ENCODE measurements at regions of chr19 and their contacts with region 1.

Region 1: DNA sequence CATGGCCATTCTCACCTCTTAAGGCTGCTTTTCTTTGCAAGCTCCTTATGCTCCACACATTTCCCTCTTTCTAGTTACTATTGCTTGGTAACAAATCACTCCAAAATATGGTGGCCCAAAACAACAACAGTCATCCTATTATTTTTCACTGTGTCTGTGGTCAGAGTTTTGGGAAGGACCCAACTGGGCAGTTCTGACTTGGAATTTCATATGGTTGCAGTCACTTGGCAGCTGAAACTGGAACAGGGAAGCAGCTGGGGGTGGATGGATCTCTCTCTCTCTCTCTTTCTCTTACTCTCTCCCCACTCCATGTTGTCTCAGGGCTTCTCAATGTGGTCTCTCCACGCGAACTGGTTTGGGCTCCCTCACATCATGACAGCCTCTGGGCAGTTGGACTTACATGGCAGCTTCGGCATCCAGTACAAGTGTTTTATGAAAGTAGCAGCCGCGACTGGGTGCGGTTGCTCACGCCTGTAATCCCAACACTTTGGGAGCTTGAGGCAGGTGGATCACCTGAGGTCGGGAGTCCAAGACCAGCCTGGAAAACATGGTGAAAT is 39.6 kb downstream of the NUMBL start:
- DNase-seq: no peak
- H3K4me3 ChIP-seq: no peak overlapping the region
- H3K27ac ChIP-seq: no peak overlapping the region
- H3K4me1 ChIP-seq: peaks cover 10% of the 10 kb centered on the region
- H3K27me3 ChIP-seq: no peaks in the 10 kb centered on the region
- CTCF ChIP-seq: no peak

Region 2: GRCh38 chr19:40806488-40807468 is 156.0 kb after region 1 on chr19:
- CTCF ChIA-PET with region 1: no interaction called
- dilution Hi-C with region 1: no loop called
- in situ Hi-C with region 1: loop called in 1 of 2 experiments (anchors 10 kb)
- intact Hi-C with region 1: no loop called
- DNase-seq: peak; percentile 63
- H3K4me3 ChIP-seq: no peak overlapping the region
- H3K27ac ChIP-seq: peak overlapping the region; percentile 23
- H3K4me1 ChIP-seq: peaks cover 48% of the 10 kb centered on the region
- H3K27me3 ChIP-seq: no peaks in the 10 kb centered on the region
- CTCF ChIP-seq: peak; percentile 79 to 83

Region 3: GRCh38 chr19:41133260-41133659 is 482.4 kb after region 1 on chr19:
- CTCF ChIA-PET with region 1: no interaction called
- dilution Hi-C with region 1: no loop called
- in situ Hi-C with region 1: loop called in 1 of 2 experiments (anchors 10 kb)
- intact Hi-C with region 1: no loop called
- DNase-seq: no peak
- H3K4me3 ChIP-seq: no peak overlapping the region
- H3K27ac ChIP-seq: no peak overlapping the region
- H3K4me1 ChIP-seq: no peaks in the 10 kb centered on the region
- H3K27me3 ChIP-seq: no peaks in the 10 kb centered on the region
- CTCF ChIP-seq: no peak

Region 4: DNA sequence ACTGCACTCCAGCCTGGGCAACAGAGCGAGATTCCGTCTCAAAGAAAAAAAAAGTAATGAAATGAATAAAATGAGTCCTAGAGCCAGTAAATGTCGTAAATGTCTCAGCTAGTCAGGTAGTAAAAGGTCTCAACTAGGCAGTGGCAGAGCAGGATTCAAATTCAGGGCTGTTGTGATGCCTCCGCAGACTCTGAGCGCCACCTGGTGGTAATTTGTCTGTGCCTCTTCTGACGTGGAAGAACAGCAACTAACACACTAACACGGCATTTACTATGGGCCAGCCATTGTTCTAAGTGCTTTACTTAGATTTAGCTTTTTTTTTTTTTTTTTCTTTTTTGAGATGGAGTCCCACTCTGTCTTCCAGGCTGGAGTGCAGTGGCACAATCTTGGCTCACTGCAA is 493.6 kb after region 1 on chr19:
- CTCF ChIA-PET with region 1: no interaction called
- dilution Hi-C with region 1: no loop called
- in situ Hi-C with region 1: loop called (anchors 10 kb)
- intact Hi-C with region 1: no loop called
- DNase-seq: peak; percentile 62
- H3K4me3 ChIP-seq: no peak overlapping the region
- H3K27ac ChIP-seq: no peak overlapping the region
- H3K4me1 ChIP-seq: no peaks in the 10 kb centered on the region
- H3K27me3 ChIP-seq: no peaks in the 10 kb centered on the region
- CTCF ChIP-seq: peak; percentile 83 to 86